ENCODE measurements at regions of chr17 and their contacts with region 1.

Region 1: DNA sequence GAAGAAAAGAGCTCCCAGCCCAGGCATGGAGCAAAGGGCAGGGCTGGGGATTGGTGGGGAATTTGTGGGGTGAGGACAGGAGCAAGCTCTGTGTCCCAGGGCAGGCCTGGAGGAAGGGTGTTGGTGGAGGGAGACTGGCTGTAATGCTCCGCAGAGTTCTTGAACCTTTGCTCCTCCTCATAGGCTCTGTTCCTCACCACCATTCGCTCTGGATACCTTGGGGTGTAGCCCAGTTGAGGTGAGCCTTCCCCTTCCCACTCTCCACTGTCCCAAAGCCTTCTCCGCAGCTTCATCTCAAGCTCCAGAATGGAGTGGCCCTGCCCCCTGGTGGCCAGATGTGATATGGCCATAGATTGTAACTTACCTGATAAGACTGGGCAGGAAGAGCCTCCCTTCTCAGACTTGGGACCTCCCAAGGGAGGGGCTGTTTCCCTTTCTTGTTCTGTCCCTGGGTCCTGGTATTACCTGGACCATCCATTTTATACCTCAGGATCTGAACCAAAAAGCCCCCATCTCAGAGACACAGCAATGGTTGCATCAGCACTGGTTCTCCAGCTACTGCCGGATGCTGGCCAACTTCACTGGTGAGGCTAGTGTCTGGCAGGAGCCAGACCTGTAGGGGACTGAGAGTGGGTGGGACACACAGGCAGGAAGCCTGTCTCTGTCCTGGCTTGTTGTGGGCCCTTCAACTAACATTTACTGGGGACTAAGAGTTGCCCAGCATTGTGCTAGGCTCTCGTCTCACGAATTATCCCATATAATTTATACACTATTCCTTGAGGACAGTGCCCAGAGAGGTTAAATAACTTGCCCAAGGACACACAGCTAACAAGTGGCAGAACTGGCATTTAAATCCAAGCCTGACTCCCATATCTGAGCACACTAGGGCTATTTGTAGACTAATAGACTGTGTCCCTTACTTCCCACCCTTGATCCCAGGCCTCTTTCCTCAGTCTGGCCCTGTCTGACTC is 19.1 kb upstream of the STAC2 start:
- DNase-seq: peak; percentile 87
- ATAC-seq: peak; percentile 80
- H3K4me3 ChIP-seq: no peak overlapping the region
- H3K4me3 Mint-ChIP-seq: peak overlapping the region; percentile 73
- H3K27ac ChIP-seq: no peak overlapping the region
- H3K27ac Mint-ChIP-seq: no peak overlapping the region
- H3K4me1 ChIP-seq: peaks cover 12 to 17% of the 10 kb centered on the region in 2 donors
- H3K4me1 Mint-ChIP-seq: peaks cover 17% of the 10 kb centered on the region
- H3K27me3 ChIP-seq: peaks cover 0 to 4% (median 0%) of the 10 kb centered on the region in 4 experiments
- H3K27me3 Mint-ChIP-seq: peaks cover 2% of the 10 kb centered on the region
- CTCF ChIP-seq: peak; percentile 97

Region 2: GRCh38 chr17:39069114-39069756 is 175.7 kb before region 1 on chr17:
- CTCF ChIA-PET with region 1: no interaction called
- POLR2A ChIA-PET with region 1: no interaction called
- intact Hi-C with region 1: loop called (anchors 1 kb)
- DNase-seq: peak; percentile 65
- ATAC-seq: peak; percentile 71
- H3K4me3 ChIP-seq: no peak overlapping the region
- H3K4me3 Mint-ChIP-seq: no peak overlapping the region
- H3K27ac ChIP-seq: no peak overlapping the region
- H3K27ac Mint-ChIP-seq: no peak overlapping the region
- H3K4me1 ChIP-seq: peaks cover 0 to 4% of the 10 kb centered on the region in 2 donors
- H3K4me1 Mint-ChIP-seq: no peaks in the 10 kb centered on the region
- H3K27me3 ChIP-seq: peaks cover 0 to 14% (median 4%) of the 10 kb centered on the region in 4 experiments
- H3K27me3 Mint-ChIP-seq: peaks cover 4% of the 10 kb centered on the region
- CTCF ChIP-seq: peak; percentile 62

Region 3: GRCh38 chr17:39174907-39175694 is 69.8 kb before region 1 on chr17:
- CTCF ChIA-PET with region 1: interaction called, 23 read pairs
- POLR2A ChIA-PET with region 1: no interaction called
- intact Hi-C with region 1: no loop called
- DNase-seq: peak; percentile 83
- ATAC-seq: peak; percentile 76
- H3K4me3 ChIP-seq: peak overlapping the region in 2 of 5 experiments; percentile 9 to 35
- H3K4me3 Mint-ChIP-seq: peak overlapping the region; percentile 53
- H3K27ac ChIP-seq: no peak overlapping the region
- H3K27ac Mint-ChIP-seq: no peak overlapping the region
- H3K4me1 ChIP-seq: peaks cover 0 to 7% of the 10 kb centered on the region in 2 donors
- H3K4me1 Mint-ChIP-seq: peaks cover 5% of the 10 kb centered on the region
- H3K27me3 ChIP-seq: peaks cover 0 to 30% (median 10%) of the 10 kb centered on the region in 4 experiments
- H3K27me3 Mint-ChIP-seq: peaks cover 23% of the 10 kb centered on the region
- CTCF ChIP-seq: peak; percentile 82

Region 4: DNA sequence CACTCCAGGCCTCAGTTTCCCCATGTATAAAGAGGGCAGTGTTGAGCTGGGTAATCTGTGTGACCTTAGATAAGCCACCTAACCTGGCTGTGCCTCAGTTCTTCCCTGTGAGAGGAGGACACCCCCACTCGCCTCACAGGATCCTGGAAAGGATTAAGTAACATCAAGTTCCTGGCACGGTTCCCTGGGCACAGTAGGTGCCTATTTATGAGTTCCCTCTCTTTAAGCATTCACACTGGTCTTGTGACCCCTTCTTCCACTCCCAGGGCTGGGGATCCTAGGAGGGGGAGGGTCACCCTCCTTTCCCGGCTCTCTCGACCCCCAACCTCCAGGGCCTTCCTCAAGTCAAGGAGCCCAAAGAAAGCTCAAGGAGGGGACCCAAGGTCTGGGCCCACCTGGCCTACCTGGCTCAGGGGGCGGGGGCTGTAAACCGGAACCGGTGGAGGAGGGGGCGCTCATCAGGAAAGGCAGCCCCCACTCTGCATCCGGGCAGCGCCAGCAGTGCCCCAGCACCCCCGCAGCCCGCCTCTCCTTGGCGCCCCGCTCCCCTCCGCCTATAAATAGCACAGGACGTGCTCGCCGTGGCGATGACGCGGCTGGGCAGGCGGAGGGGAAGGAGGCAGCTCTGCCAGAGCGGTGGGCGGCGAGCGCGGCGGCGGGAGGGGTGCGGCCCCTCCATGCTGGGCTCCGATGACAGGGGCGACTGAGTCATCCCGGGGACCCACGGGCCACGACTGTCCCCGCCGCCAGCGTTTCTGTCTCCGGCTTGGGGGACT is 35.4 kb before region 1 on chr17:
- CTCF ChIA-PET with region 1: interaction called, 707 read pairs
- POLR2A ChIA-PET with region 1: interaction called, 12 read pairs
- intact Hi-C with region 1: loop called (anchors 1 kb)
- DNase-seq: peak; percentile 65
- ATAC-seq: peak; percentile 40
- H3K4me3 ChIP-seq: peak overlapping the region in 4 of 5 experiments; percentile 35 to 52 (median 48)
- H3K4me3 Mint-ChIP-seq: peak overlapping the region; percentile 77
- H3K27ac ChIP-seq: no peak overlapping the region
- H3K27ac Mint-ChIP-seq: peak overlapping the region; percentile 68
- H3K4me1 ChIP-seq: peaks cover 32 to 39% of the 10 kb centered on the region in 2 donors
- H3K4me1 Mint-ChIP-seq: peaks cover 33% of the 10 kb centered on the region
- H3K27me3 ChIP-seq: peaks cover 0 to 12% (median 3%) of the 10 kb centered on the region in 4 experiments
- H3K27me3 Mint-ChIP-seq: no peaks in the 10 kb centered on the region
- CTCF ChIP-seq: no peak

Region 5: DNA sequence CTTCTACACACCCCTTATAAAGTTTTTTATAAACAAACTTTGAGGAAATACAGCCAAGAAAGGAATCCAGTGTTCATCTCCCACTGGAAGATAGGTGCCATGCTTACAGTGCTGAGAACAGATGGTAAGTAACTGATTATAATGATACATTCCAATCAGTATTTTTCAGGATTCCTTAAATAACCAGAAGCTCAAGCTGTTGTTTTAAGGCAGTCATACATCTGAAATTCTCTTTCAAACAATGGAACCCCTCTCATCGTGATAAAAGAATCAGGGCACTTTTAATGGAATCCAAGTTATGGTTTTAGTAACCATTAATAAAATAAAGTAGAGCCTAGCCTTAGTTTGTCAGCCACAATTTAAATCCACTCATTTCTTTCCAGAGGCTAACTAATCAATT is 36.9 kb after region 1 on chr17:
- CTCF ChIA-PET with region 1: interaction called, 10 read pairs
- POLR2A ChIA-PET with region 1: no interaction called
- intact Hi-C with region 1: no loop called
- DNase-seq: no peak
- ATAC-seq: no peak
- H3K4me3 ChIP-seq: no peak overlapping the region
- H3K4me3 Mint-ChIP-seq: no peak overlapping the region
- H3K27ac ChIP-seq: no peak overlapping the region
- H3K27ac Mint-ChIP-seq: no peak overlapping the region
- H3K4me1 ChIP-seq: peaks cover 6 to 9% of the 10 kb centered on the region in 2 donors
- H3K4me1 Mint-ChIP-seq: peaks cover 9% of the 10 kb centered on the region
- H3K27me3 ChIP-seq: no peaks in the 10 kb centered on the region
- H3K27me3 Mint-ChIP-seq: no peaks in the 10 kb centered on the region
- CTCF ChIP-seq: no peak